ENCODE measurements at regions of chr10 and their contacts with region 1.

Region 1: DNA sequence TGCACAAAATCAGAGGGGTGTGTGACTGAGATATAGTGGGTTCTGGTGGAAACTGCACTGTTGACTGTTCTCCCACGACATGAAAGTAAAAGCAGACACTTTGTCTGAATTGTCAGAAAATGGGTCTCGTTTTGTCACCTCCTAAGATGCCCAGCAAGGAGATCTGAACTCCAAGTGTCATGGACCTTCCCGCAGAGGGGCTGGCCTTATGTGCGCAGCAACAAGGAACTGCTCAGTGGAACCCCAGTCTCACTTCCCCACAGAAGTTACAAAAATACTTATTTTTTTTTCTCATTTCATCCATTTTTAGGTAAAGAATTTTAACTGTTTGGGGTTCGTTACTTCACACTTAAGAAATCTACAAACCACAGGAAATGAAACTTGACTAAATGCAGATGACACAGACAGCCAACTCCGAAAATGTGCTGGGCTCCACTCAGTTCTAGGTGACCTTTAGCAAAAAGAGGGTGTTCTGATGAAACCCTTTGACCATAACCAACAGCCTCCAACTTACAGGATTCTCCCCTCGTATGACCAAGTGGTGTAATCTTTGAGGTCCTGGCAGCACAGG is 115.0 kb downstream of the FAM107B start:
- DNase-seq: peak; percentile 59
- H3K4me3 Mint-ChIP-seq: peak overlapping the region; percentile 66
- H3K27ac Mint-ChIP-seq: peak overlapping the region; percentile 95
- H3K4me1 Mint-ChIP-seq: peaks cover 81% of the 10 kb centered on the region
- H3K27me3 Mint-ChIP-seq: no peaks in the 10 kb centered on the region

Region 2: GRCh38 chr10:14389978-14390590 is 269.6 kb before region 1 on chr10:
- intact Hi-C with region 1: loop called (anchors 1 kb)
- DNase-seq: peak; percentile 14
- H3K4me3 Mint-ChIP-seq: no peak overlapping the region
- H3K27ac Mint-ChIP-seq: no peak overlapping the region
- H3K4me1 Mint-ChIP-seq: peaks cover 24% of the 10 kb centered on the region
- H3K27me3 Mint-ChIP-seq: peaks cover 41% of the 10 kb centered on the region

Region 3: DNA sequence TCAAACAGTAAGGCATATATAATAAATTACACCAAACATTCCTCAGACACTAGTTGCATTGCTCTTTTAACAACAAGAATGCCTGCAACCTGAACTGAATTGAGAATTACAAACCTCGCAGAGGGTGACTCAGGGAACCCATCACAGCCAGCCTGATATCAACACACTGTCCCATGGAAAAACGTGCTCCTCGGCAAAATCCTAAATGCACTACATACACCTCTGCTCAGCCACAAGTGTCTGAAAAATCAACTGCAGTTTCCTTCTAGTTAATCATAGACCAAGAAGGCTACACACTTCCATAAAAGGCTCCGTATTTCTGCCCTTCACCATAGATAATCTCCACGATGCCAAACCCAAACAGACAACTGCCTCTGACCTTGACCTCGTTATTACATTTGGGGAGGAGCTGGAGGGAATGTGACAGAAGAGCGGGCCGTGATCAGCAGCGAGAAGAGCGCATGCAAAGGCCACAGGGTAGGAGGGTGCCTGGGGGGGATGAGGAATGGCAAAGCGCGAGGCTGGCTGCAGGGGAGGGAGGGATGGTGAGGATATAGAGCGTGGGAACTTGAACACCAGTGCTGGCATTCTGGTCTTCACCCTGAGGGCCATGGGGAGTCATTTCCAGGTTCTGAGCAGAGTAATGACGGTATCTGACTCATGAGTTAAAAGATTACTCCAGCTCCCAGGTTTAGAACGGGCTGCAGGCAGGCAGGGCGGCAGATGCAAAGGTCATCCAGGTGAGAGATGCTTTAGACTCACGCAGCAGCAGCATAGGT is 127.0 kb before region 1 on chr10:
- intact Hi-C with region 1: no loop called
- DNase-seq: no peak
- H3K4me3 Mint-ChIP-seq: no peak overlapping the region
- H3K27ac Mint-ChIP-seq: peak overlapping the region; percentile 26
- H3K4me1 Mint-ChIP-seq: peaks cover 68% of the 10 kb centered on the region
- H3K27me3 Mint-ChIP-seq: no peaks in the 10 kb centered on the region

Region 4: GRCh38 chr10:14560274-14560673 is 99.4 kb before region 1 on chr10:
- intact Hi-C with region 1: loop called (anchors 2 kb)
- DNase-seq: peak; percentile 52
- H3K4me3 Mint-ChIP-seq: peak overlapping the region; percentile 38
- H3K27ac Mint-ChIP-seq: peak overlapping the region; percentile 84
- H3K4me1 Mint-ChIP-seq: peaks cover 83% of the 10 kb centered on the region
- H3K27me3 Mint-ChIP-seq: no peaks in the 10 kb centered on the region

Region 5: DNA sequence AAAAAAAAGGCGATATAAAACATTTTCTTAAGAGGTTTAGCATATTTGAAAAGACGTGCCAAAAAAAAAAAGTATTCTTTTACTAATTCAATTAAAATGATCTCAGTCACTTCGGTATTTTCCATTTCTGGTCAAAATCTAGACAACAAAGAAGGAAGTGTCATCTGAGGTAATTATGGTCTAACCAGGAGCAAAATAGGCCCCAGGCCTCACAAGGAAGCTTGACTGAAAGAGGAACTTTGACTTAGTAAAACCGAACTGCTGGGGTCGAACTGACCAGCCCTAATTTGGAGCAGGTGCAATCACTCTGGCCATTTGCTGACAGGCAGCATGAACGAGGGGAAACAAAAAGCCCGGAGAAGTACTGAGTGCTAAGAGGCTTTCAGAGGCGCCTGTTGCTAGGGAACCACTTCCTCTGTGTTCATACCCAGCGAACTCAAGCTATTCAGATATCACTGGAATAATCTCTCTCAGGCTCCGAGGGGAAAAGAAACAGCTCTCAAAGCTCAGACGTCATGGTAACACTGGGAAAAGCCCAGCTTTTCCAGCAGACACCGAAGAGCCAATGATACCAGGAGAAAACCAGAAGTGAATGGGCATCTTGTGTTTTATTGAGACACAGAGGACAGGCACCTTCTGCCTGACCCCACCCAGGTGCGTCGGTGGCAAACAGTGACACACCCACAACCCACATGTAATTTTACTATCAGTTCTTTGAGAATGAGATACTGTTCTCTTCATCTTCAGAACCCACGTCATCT is 11.5 kb before region 1 on chr10:
- intact Hi-C with region 1: loop called (anchors 1 kb)
- DNase-seq: peak; percentile 73
- H3K4me3 Mint-ChIP-seq: peak overlapping the region; percentile 63
- H3K27ac Mint-ChIP-seq: peak overlapping the region; percentile 96
- H3K4me1 Mint-ChIP-seq: peaks cover 68% of the 10 kb centered on the region
- H3K27me3 Mint-ChIP-seq: no peaks in the 10 kb centered on the region

Region 6: GRCh38 chr10:14705548-14706230 is 46.0 kb after region 1 on chr10:
- intact Hi-C with region 1: no loop called
- DNase-seq: no peak
- H3K4me3 Mint-ChIP-seq: no peak overlapping the region
- H3K27ac Mint-ChIP-seq: no peak overlapping the region
- H3K4me1 Mint-ChIP-seq: peaks cover 3% of the 10 kb centered on the region
- H3K27me3 Mint-ChIP-seq: peaks cover 4% of the 10 kb centered on the region

Region 7: GRCh38 chr10:14742815-14743214 is 83.1 kb after region 1 on chr10:
- intact Hi-C with region 1: loop called (anchors 1 kb)
- DNase-seq: no peak
- H3K4me3 Mint-ChIP-seq: peak overlapping the region; percentile 3
- H3K27ac Mint-ChIP-seq: peak overlapping the region; percentile 76
- H3K4me1 Mint-ChIP-seq: peaks cover 33% of the 10 kb centered on the region
- H3K27me3 Mint-ChIP-seq: no peaks in the 10 kb centered on the region

Region 8: DNA sequence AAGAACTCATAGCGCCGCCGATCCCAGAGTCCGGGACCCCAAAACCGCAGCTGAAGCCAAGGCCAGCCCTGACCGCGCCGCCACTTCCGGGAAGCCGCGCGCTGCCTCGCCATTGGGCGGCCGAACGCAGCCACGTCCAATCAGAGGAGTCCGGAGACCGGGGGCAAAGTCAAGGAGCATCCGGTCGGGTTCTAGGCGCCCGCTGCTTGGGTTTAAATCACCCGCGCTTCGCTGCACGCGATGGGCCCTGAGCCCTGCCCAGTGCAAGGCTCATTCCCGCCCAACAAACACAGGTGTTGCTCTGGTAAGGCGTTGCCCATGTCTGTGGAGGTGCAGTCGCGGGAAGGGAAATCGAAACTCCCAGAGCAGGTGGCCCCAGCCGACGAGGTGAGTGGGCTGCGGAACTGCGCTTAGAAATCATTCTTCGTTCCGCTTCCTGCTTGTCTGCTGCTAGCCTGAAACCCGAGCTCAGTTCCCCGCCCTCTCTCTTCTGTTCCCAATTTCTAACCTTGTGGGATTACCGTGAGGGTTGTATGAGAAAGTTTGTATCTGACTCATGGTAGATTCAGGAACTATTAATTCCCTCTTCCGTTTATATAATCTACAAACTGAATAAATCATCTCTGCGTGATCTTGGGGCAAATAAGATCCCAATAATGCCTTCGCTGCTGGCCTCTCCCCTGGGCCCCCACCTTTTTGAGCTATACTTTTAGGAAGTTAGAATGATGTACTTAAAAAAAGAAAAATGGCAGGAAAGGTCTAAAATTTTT is 294.5 kb after region 1 on chr10 and contains the start of gene DCLRE1C:
- intact Hi-C with region 1: loop called (anchors 5 kb)
- DNase-seq: peak; percentile 89
- H3K4me3 Mint-ChIP-seq: peak within 1 kb of the TSS; percentile 89
- H3K27ac Mint-ChIP-seq: peak within 1 kb of the TSS; percentile 93
- H3K4me1 Mint-ChIP-seq: peaks cover 44% of the 10 kb centered on the region
- H3K27me3 Mint-ChIP-seq: no peaks in the 10 kb centered on the region
- total RNA-seq, gene DCLRE1C: 20.5 and 21.0 TPM in 2 replicates

Region 9: DNA sequence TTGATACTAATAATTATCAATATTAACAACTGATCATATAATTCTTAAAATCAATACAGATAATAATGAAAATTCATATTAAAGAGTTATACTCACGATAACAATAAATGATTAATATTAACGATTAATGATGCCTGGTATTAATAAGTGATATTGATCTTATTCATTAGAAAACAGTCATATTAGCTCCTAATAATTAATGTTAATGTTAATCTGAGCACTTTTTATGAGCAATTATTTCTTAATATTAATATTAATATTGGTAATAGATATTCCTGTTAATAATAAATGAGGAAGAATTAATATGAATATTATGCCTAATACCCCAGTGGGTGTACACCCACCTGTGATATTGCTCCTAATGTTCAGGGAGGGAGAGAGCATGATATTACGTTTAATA is 323.0 kb after region 1 on chr10:
- intact Hi-C with region 1: no loop called
- DNase-seq: no peak
- H3K4me3 Mint-ChIP-seq: no peak overlapping the region
- H3K27ac Mint-ChIP-seq: no peak overlapping the region
- H3K4me1 Mint-ChIP-seq: no peaks in the 10 kb centered on the region
- H3K27me3 Mint-ChIP-seq: no peaks in the 10 kb centered on the region

Measured in activated T-helper 2 cell treated with anti-CD3 and anti-CD28 coated beads, Interferon-gamma antibody, Interleukin-2, Interleukin-4, amounts not matched to agents 10 μg/mL and 5 μg/mL and 100 μg/mL, durations not matched to agents 14 hours and 24 hours and 36 hours (primary cell).